ENCODE measurements at regions of chr19 and their contacts with region 1.

Region 1: DNA sequence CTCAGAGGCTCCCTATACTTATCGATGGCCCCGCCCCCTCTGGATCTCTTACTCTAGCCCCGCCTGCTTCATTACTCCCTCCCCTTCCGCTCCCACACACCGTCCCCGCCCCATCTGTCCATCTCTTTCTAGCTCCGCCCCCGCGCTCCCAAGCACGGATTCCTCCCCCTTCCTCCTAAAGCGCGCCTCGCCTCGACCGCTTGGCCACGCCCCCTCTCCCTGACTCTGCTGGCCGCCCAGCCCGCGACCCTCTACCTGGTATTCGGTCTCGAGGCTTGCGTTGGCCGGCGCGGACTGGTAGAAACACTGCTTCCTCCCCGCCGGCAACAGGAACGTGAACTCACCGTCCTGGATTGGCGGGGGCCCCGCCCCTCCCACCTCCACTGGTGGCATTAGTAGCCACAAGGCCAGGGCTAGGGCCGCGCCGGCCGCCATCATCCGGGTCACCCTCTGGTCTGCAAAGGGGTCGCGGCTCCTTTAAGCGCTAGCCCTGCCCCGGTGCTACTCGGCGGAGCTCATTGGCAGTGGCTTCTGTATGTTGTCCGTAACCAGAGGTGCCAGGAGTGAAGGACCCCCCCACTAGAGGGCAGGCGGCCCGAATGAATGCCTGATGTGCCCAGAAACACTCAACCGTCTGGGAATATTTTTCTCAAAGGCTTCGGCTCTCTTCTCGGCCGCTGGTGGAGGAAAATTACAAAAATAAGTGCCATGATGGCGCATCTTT is at the start of gene TMED1:
- DNase-seq: peak; percentile 94 to 100 (median 99)
- H3K4me3 ChIP-seq: peak within 1 kb of the TSS; percentile 58 to 97 (median 83)
- H3K27ac ChIP-seq: peak within 1 kb of the TSS; percentile 88 to 100 (median 99)
- H3K27me3 ChIP-seq: no peaks in the 10 kb centered on the region
- CTCF ChIP-seq: peak in 53 of 56 donors; percentile 27 to 77 (median 49)
- total RNA-seq, gene TMED1: 7.7 to 25.1 (median 13.0) TPM

Region 2: GRCh38 chr19:10864538-10864899 is 28.6 kb after region 1 on chr19:
- intact Hi-C with region 1: loop called in 1 of 2 experiments (anchors 2 kb)
- DNase-seq: peak; percentile 71 to 92 (median 84)
- H3K4me3 ChIP-seq: peak overlapping the region in 8 of 59 donors; percentile 11 to 44 (median 28)
- H3K27ac ChIP-seq: peak overlapping the region in 34 of 59 donors; percentile 12 to 59 (median 35)
- H3K27me3 ChIP-seq: no peaks in the 10 kb centered on the region
- CTCF ChIP-seq: peak; percentile 71 to 93 (median 87)